Right cardiac atrium (tissue), 5 donors: ENCODE measurements at regions of chr18 and their contacts with region 1.

Region 1: GRCh38 chr18:47748847-47749599 is 181.4 kb downstream of the SMAD2 start:
- DNase-seq: peak; percentile 75 to 94 (median 92)
- ATAC-seq: peak; percentile 93 to 94
- H3K4me3 ChIP-seq: peak overlapping the region; percentile 40
- H3K27ac ChIP-seq: no peak overlapping the region
- H3K4me1 ChIP-seq: no peaks in the 10 kb centered on the region
- H3K27me3 ChIP-seq: no peaks in the 10 kb centered on the region

Region 2: DNA sequence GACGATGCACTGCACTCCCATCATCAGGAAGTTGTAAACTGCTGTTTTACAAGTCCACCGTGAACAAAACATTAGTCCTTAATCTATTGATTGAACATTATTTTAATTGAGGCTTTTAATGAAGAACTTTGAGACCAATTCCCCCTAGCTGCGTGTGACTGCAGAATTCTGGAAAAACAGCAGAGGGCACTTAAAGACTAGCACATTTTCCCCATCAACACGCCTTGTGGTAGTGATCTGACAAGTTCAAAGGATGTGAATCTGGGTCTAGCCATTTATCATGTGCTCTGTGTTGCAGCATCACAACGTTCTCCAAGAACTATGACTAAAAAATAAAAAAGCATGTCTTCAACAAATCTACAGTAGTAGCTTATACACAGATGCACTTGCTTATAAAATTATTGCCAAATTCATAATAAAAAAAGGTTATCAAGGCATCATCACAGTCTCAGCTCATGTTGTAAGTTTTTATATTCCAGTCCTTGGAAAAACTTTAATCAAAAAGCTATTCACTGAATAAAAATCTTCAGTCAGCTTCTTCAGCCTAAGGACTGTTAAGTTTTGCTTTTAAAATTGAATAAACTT is 533.4 kb before region 1 on chr18:
- intact Hi-C with region 1: loop called (anchors 2 to 5 kb)
- DNase-seq: no peak
- ATAC-seq: peak in 1 of 2 donors; percentile 55
- H3K4me3 ChIP-seq: no peak overlapping the region
- H3K27ac ChIP-seq: no peak overlapping the region
- H3K4me1 ChIP-seq: no peaks in the 10 kb centered on the region
- H3K27me3 ChIP-seq: no peaks in the 10 kb centered on the region

Region 3: GRCh38 chr18:47986620-47987387 is 237.8 kb after region 1 on chr18:
- intact Hi-C with region 1: no loop called
- DNase-seq: no peak
- ATAC-seq: no peak
- H3K4me3 ChIP-seq: no peak overlapping the region
- H3K27ac ChIP-seq: no peak overlapping the region
- H3K4me1 ChIP-seq: no peaks in the 10 kb centered on the region
- H3K27me3 ChIP-seq: no peaks in the 10 kb centered on the region